ENCODE measurements at regions of chr9 and their contacts with region 1.

Region 1: DNA sequence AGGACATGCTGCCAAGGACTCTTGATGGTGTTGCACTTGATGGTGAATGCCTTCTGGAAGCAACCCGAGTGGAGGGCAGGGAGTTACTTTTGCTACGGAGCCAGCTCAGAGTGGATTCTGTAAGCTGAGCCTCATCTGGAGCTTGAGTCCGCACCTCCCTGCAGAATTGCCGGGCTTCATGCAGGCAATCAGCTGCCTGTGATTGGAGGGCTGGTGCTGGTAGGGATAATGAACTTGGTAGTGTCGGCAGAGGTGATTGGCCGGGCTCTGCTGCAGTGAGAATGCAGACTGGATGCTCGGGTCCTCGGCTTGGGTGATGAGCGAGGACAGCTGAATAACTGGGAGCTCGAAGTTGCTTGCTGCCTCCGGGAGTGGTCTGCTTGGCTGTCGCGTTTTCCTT is 23.1 kb downstream of the SLC25A25 start:
- DNase-seq: peak; percentile 82
- H3K4me3 ChIP-seq: no peak overlapping the region
- H3K27ac ChIP-seq: peak overlapping the region; percentile 25
- H3K4me1 ChIP-seq: peaks cover 49% of the 10 kb centered on the region
- H3K27me3 ChIP-seq: no peaks in the 10 kb centered on the region
- CTCF ChIP-seq: no peak

Region 2: GRCh38 chr9:127977886-127978621 is 113.1 kb before region 1 on chr9:
- CTCF ChIA-PET with region 1: interaction called, 10 read pairs
- POLR2A ChIA-PET with region 1: no interaction called
- intact Hi-C with region 1: no loop called
- DNase-seq: no peak
- H3K4me3 ChIP-seq: peak overlapping the region; percentile 96
- H3K27ac ChIP-seq: peak overlapping the region; percentile 17
- H3K4me1 ChIP-seq: peaks cover 34% of the 10 kb centered on the region
- H3K27me3 ChIP-seq: no peaks in the 10 kb centered on the region
- CTCF ChIP-seq: no peak

Region 3: DNA sequence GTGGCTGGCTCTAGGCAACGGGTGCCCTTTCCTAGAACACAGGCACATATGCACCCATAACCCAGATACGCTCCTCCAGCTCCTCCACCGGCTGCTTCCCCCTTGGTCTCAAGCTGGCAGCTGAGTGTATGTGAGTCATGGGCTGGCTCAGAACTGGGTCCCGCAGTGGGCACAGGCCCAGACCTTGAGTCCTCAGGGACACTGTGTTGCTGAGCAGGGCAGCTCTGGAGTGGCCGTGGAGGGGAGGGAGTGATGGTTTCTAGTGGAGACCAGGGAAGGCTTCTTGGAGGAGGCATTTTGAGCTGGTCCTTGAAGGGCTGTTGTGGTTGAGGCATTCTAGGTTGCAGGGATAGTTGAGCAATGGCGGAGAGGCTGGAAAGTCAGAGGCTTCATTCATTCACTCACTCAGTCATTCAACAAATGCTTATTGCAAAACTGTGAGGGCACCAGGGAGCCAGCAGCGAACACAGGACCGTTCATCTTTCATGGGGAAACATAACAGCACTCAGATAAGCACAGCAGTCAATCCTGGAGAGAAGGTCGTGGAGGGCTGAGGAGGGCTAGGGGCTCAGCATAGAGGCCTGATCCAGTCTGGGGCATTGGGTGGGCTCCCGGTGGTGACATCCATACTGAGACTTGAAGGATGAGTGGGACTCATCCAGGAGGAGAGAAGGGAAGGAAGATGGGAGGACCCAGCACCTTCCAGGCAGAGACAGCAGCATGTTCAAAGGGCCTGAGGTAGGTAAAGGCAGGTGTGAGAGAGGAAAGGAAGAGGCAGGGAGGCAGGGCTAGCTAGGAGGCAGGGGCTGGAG is 71.3 kb after region 1 on chr9:
- CTCF ChIA-PET with region 1: no interaction called
- POLR2A ChIA-PET with region 1: no interaction called
- intact Hi-C with region 1: no loop called
- DNase-seq: no peak
- H3K4me3 ChIP-seq: no peak overlapping the region
- H3K27ac ChIP-seq: no peak overlapping the region
- H3K4me1 ChIP-seq: peaks cover 7% of the 10 kb centered on the region
- H3K27me3 ChIP-seq: no peaks in the 10 kb centered on the region
- CTCF ChIP-seq: no peak

Measured in A673 (cell line).